ENCODE measurements at regions of chr3 and their contacts with region 1.

Region 1: GRCh38 chr3:197002701-197003454 is 26.7 kb downstream of the MELTF start:
- DNase-seq: peak; percentile 98
- H3K4me3 ChIP-seq: peak overlapping the region in 1 of 2 experiments; percentile 52; a peak in 2 of 4 replicates
- H3K27ac ChIP-seq: peak overlapping the region in 1 of 2 experiments; percentile 66; a peak in 2 of 4 replicates
- H3K4me1 ChIP-seq: peaks cover 0 to 9% of the 10 kb centered on the region in 2 experiments; a peak in 1 of 4 replicates
- H3K27me3 ChIP-seq: no peaks in the 10 kb centered on the region
- CTCF ChIP-seq: peak; percentile 54
- EP300 ChIP-seq: no peak
- RAD21 ChIP-seq: peak; percentile 59

Region 2: GRCh38 chr3:196914866-196915265 is 88.0 kb before region 1 on chr3:
- CTCF ChIA-PET with region 1: no interaction called
- POLR2A ChIA-PET with region 1: no interaction called
- DNase-seq: no peak
- H3K4me3 ChIP-seq: no peak overlapping the region
- H3K27ac ChIP-seq: no peak overlapping the region
- H3K4me1 ChIP-seq: no peaks in the 10 kb centered on the region
- H3K27me3 ChIP-seq: no peaks in the 10 kb centered on the region
- CTCF ChIP-seq: no peak
- EP300 ChIP-seq: no peak
- RAD21 ChIP-seq: no peak

Region 3: GRCh38 chr3:196989721-196990271 is 13.1 kb before region 1 on chr3:
- CTCF ChIA-PET with region 1: interaction called, 25 read pairs
- POLR2A ChIA-PET with region 1: no interaction called
- DNase-seq: no peak
- H3K4me3 ChIP-seq: no peak overlapping the region
- H3K27ac ChIP-seq: no peak overlapping the region
- H3K4me1 ChIP-seq: peaks cover 0 to 11% of the 10 kb centered on the region in 2 experiments; a peak in 1 of 4 replicates
- H3K27me3 ChIP-seq: no peaks in the 10 kb centered on the region; the same call in 1 of the 2 replicates
- CTCF ChIP-seq: no peak
- EP300 ChIP-seq: no peak
- RAD21 ChIP-seq: no peak

Region 4: GRCh38 chr3:197015766-197016736 is 13.2 kb after region 1 on chr3:
- CTCF ChIA-PET with region 1: interaction called, 11 read pairs
- POLR2A ChIA-PET with region 1: no interaction called
- DNase-seq: no peak
- H3K4me3 ChIP-seq: no peak overlapping the region
- H3K27ac ChIP-seq: no peak overlapping the region
- H3K4me1 ChIP-seq: peaks cover 0 to 10% of the 10 kb centered on the region in 2 experiments; a peak in 1 of 4 replicates
- H3K27me3 ChIP-seq: no peaks in the 10 kb centered on the region
- CTCF ChIP-seq: no peak
- EP300 ChIP-seq: no peak
- RAD21 ChIP-seq: no peak

Region 5: DNA sequence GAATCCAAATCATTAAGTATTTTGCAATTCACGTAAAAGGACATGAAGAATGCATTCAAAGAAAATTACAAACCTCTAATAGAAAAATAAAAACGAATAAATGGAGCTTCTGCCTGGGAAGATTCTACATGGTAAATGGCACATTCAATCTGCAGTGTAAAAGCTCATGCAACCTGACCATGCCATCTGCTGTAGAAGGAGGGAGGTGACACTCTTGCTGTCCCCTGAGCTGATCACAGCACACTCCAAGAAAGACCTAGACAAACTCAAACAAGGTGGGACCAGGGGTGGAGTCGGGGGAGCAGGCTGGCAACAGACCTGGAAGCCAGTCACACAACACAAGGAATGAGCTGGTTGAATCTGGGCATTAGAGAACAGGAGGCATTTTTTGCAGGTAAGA is 451.1 kb after region 1 on chr3:
- CTCF ChIA-PET with region 1: no interaction called
- POLR2A ChIA-PET with region 1: no interaction called
- DNase-seq: peak; percentile 50
- H3K4me3 ChIP-seq: no peak overlapping the region
- H3K27ac ChIP-seq: no peak overlapping the region
- H3K4me1 ChIP-seq: peaks cover 0 to 8% of the 10 kb centered on the region in 2 experiments; a peak in 1 of 4 replicates
- H3K27me3 ChIP-seq: no peaks in the 10 kb centered on the region
- CTCF ChIP-seq: peak; percentile 31
- EP300 ChIP-seq: no peak
- RAD21 ChIP-seq: peak; percentile 76

Measured in SK-N-SH (cell line).